ENCODE measurements at regions of chr18 and their contacts with region 1.

Region 1: DNA sequence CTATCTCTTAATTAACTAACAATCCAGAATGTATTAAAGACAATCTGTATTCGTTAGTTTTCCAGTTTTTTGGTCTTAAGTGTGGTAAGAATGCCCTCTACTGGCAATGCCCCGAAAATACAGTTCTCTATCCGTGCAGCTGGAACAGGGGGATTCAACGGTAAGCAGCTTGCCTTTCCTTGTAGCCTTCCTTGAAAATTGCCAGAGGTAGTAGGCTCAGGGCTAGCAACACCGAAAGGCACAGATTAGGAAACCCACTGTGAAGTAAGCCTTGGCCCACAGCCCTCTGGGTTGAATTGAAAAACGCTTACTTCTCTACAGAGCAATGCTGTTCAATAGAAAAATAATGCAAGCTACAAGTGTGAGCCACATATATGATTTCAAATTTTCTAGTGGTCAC is 17.1 kb upstream of the VPS4B start:
- DNase-seq: peak; percentile 10 to 33
- ATAC-seq: peak; percentile 68 to 80
- H3K4me3 ChIP-seq: no peak overlapping the region
- H3K27ac ChIP-seq: no peak overlapping the region
- H3K4me1 ChIP-seq: peaks cover 3 to 5% of the 10 kb centered on the region in 2 donors
- H3K27me3 ChIP-seq: no peaks in the 10 kb centered on the region
- CTCF ChIP-seq: peak; percentile 64 to 77 (median 67)
- POLR2A ChIP-seq: no peak

Region 2: GRCh38 chr18:63339920-63340484 is 99.3 kb before region 1 on chr18:
- in situ Hi-C with region 1: loop called in 3 of 4 experiments (anchors 5 to 25 kb)
- intact Hi-C with region 1: no loop called
- DNase-seq: no peak
- ATAC-seq: no peak
- H3K4me3 ChIP-seq: no peak overlapping the region
- H3K27ac ChIP-seq: no peak overlapping the region
- H3K4me1 ChIP-seq: peaks cover 0 to 4% of the 10 kb centered on the region in 2 donors
- H3K27me3 ChIP-seq: no peaks in the 10 kb centered on the region
- CTCF ChIP-seq: peak; percentile 10 to 50 (median 24)
- POLR2A ChIP-seq: no peak